Posterior cingulate gyrus (tissue), 11 donors: ENCODE measurements at regions of chr1 and their contacts with region 1.

Region 1: DNA sequence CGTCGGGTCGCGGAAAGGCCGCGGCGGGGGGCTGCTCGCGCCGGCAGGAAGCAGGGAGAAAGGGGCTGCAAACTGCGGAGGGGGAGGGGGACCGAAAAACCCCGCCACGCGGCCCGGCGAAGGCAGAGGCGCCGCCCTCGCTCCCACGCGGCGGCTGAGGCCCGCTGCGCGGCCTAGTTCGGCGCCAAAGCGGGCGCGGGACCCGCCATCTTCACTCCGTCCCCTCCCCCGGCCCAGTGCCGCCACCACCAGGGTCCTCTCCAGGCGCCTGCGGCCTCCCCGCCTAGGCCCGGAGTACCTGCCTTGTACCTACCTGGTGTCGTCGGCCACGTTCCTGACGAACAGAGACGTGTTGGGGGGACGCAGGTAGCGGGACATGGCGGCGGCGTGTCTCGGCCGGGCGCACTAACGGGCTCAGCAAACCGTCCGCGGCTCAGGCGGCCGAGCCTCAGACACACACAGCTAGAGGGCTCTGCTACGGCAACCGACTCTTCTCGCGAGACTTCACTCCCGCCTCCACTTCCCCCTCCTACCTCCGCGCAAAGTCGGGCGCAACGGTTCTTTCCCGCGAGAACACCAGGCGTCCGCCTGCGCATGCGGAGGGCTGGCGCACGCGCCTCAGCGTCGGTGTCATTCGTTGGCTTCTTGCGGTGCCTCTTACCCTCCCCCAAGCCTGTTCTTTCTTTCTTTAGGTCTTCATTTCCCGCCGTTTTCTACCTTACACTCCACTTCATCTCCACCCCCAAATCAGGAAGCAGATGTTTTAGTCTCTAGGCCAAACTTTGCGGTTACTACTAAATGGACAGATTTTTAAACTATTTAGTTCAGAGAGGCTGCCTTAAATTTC is at the start of gene SRSF10:
- DNase-seq: peak; percentile 96 to 100 (median 97)

Region 2: GRCh38 chr1:23959041-23959460 is 21.1 kb before region 1 on chr1:
- intact Hi-C with region 1: loop called (anchors 2 kb)
- DNase-seq: peak; percentile 15 to 91 (median 52)

Region 3: DNA sequence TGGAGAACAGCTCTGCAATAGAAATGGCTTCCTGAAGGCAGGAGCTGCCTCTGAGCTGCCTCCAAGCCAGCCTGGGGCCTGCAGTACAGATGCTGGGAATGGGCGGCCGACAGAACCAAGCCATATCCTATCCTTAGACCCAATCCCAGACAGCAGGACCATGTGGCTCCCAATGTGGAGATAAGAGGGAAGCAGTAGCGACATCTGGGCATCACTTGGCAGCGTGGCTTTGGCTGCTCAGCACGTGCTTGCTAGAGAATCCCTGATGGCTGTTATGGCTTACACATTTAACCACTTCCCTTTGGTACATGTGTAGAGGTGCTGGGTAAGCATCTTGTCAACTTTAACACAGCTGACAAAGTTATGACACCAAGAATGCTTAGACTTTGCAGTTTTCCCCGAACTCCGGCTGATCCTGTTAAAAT is 1724.2 kb after region 1 on chr1:
- intact Hi-C with region 1: no loop called
- DNase-seq: peak in 4 of 10 donors; percentile 33 to 91 (median 58)